OCI-LY7 (cell line): ENCODE measurements at regions of chr19 and their contacts with region 1.

Region 1: GRCh38 chr19:40798223-40798996 is 581 bp upstream of the EGLN2 start:
- DNase-seq: peak; percentile 100
- H3K4me3 ChIP-seq: peak overlapping the region; percentile 62
- H3K27ac ChIP-seq: peak overlapping the region; percentile 57
- H3K4me1 ChIP-seq: peaks cover 53% of the 10 kb centered on the region
- CTCF ChIP-seq: peak; percentile 63

Region 2: GRCh38 chr19:40716655-40717324 is 81.6 kb before region 1 on chr19 and contains the starts of genes COQ8B and ITPKC:
- CTCF ChIA-PET with region 1: no interaction called
- POLR2A ChIA-PET with region 1: no interaction called
- intact Hi-C with region 1: loop called (anchors 2 kb)
- DNase-seq: peak; percentile 99
- H3K4me3 ChIP-seq: peak within 1 kb of the TSS; percentile 70
- H3K27ac ChIP-seq: peak within 1 kb of the TSS; percentile 72
- H3K4me1 ChIP-seq: peaks cover 37% of the 10 kb centered on the region
- CTCF ChIP-seq: no peak
- total RNA-seq, gene COQ8B: 34.9 and 39.3 TPM in 2 replicates
- total RNA-seq, gene ITPKC: 4.0 and 6.5 TPM in 2 replicates